Activated naive CD4-positive, alpha-beta T cell treated with anti-CD3 and anti-CD28 coated beads for 36 hours (primary cell): ENCODE measurements at regions of chr3 and their contacts with region 1.

Region 1: DNA sequence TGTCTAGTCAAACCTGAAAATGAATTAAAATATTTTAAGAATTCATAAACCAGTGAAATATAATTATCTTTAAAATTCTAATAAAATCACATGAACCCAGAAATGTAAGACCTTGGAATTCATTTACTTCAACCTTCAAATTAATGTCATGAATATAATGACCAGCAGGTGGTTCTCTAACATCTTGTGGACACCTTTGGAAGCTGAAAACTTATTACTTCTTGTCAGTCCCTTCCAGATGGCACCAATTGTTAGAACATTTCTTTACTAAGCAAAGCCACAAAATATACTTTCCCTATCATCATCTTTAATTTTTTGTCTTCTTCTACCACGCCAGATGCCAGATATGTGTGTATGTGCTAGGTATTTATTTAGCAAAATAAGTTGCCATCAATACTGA is 240.0 kb downstream of the MBNL1 start:
- DNase-seq: no peak
- H3K4me3 Mint-ChIP-seq: no peak overlapping the region
- H3K27ac Mint-ChIP-seq: no peak overlapping the region
- H3K4me1 Mint-ChIP-seq: peaks cover 8% of the 10 kb centered on the region
- H3K27me3 Mint-ChIP-seq: no peaks in the 10 kb centered on the region

Region 2: GRCh38 chr3:152574461-152575079 is 65.9 kb after region 1 on chr3:
- CTCF ChIA-PET with region 1: interaction called, 9 read pairs
- intact Hi-C with region 1: loop called (anchors 1 kb)
- DNase-seq: peak; percentile 68
- H3K4me3 Mint-ChIP-seq: no peak overlapping the region
- H3K27ac Mint-ChIP-seq: no peak overlapping the region
- H3K4me1 Mint-ChIP-seq: no peaks in the 10 kb centered on the region
- H3K27me3 Mint-ChIP-seq: no peaks in the 10 kb centered on the region